ENCODE measurements at regions of chr7 and their contacts with region 1.

Region 1: DNA sequence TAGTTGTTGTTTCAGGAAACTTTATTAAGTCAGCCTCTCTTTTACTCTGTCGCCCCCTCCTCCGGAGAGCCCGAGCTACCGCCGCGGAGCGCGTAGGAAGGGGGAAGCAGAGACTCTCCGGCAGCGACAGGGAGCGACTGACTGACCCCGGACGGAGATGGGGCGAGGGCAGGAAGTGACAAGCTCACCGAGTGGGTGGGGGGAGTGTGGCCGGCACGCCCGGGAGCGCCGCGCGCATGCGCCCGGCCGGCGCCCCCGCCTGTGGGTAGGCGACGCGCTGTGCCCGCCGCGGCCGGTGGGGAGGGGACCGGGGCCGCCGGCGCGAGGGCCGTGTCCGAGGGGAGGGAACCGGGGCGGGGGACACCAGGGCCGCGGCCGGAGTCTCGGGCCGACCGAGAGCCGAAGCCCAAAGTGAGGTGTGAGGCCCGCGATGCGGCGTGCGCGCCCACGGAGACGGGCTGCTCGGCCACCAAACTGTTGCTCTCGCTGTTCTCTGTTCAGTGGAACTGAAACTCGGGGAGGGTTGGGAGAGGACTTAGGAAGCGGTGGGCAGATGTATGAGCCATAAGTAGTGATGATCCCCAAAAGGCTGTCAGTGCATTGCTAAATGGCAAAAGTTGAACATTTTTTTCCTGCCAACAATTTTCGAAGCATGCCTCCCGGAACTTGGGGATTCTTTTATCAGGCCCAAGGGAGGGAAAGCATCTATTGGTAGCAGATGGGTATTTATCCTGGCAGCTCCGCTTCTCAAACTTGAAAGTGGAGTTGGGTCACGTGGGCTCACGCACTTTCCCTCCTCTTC is at the start of gene ZNF800:
- DNase-seq: peak; percentile 86
- H3K4me3 Mint-ChIP-seq: peak within 1 kb of the TSS; percentile 95
- H3K27ac Mint-ChIP-seq: peak within 1 kb of the TSS; percentile 97
- H3K4me1 Mint-ChIP-seq: peaks cover 60% of the 10 kb centered on the region
- H3K27me3 Mint-ChIP-seq: peaks cover 6% of the 10 kb centered on the region
- total RNA-seq, gene ZNF800: 39.1 and 44.2 TPM in 2 replicates

Region 2: DNA sequence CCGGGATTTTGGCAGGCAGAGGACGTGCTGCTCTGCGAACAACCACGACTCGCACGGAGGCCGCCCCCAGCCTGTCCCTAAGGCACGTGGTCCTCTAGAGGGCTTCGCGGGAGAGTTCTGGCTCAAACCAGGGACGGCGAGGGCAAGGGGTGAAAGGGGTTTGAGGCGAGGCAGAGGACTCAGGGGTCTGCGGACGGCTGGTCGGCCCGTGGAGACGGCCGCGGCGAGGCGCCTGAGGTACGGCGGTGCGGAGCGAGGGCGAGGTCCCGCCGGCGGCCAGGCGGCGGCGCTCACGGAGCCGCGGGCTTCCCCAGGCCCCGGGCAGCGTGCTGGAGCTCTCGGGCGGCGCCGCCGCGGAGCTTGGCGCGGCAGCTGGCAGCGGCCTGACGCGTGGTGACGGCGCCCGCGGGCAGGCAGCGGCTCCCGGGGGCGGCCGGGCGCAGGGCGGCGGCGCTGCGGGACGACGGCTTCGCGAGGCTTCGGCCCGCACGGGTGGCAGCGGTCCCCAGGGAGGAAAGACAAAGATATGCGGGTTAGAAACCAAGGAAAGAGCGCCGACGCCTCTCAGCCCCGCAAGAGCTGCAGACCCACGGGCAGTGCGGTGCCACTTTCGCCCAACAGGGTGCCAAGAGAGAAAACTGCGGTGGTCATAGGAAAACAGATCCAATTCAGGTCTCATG is 45.1 kb before region 1 on chr7:
- intact Hi-C with region 1: loop called (anchors 2 kb)
- DNase-seq: peak; percentile 59
- H3K4me3 Mint-ChIP-seq: peak overlapping the region; percentile 25
- H3K27ac Mint-ChIP-seq: no peak overlapping the region
- H3K4me1 Mint-ChIP-seq: peaks cover 7% of the 10 kb centered on the region
- H3K27me3 Mint-ChIP-seq: peaks cover 24% of the 10 kb centered on the region

Region 3: DNA sequence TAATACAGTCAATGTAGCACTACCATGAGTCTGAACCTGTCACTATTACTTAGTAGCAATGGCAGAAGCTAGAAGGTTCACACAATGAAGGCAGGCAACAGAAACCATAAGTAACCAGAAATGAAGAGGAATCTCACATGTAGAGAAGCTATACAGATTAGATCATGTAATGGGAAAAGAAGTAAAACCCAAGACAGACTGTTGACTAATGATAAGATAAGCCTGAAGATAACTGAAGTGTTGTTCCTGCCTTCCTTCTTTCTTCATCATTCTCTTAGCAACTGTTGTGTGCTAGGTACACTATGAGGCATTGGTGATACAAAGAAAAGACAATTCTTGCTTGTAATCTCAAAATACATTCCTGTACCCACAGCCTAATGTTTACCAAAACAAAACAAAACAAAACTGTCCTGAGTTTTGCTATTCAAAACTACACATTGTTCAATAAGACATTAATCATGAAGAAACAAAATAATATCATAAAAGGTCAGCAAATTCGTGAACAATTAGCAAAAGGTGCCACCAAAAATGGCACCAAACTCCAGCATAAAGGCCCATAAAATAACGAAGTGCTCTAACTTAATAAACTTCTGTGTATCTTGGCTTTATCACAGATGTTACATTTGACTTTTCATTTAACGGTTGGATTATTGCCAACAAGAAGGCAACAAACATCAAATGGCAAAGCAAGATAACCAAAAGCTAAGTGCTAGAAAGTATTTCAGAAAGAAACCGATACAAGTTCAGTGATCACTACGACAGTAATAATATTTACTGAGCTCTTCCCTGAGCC is 27.4 kb before region 1 on chr7:
- intact Hi-C with region 1: no loop called
- DNase-seq: no peak
- H3K4me3 Mint-ChIP-seq: no peak overlapping the region
- H3K27ac Mint-ChIP-seq: no peak overlapping the region
- H3K4me1 Mint-ChIP-seq: peaks cover 10% of the 10 kb centered on the region
- H3K27me3 Mint-ChIP-seq: no peaks in the 10 kb centered on the region

Region 4: DNA sequence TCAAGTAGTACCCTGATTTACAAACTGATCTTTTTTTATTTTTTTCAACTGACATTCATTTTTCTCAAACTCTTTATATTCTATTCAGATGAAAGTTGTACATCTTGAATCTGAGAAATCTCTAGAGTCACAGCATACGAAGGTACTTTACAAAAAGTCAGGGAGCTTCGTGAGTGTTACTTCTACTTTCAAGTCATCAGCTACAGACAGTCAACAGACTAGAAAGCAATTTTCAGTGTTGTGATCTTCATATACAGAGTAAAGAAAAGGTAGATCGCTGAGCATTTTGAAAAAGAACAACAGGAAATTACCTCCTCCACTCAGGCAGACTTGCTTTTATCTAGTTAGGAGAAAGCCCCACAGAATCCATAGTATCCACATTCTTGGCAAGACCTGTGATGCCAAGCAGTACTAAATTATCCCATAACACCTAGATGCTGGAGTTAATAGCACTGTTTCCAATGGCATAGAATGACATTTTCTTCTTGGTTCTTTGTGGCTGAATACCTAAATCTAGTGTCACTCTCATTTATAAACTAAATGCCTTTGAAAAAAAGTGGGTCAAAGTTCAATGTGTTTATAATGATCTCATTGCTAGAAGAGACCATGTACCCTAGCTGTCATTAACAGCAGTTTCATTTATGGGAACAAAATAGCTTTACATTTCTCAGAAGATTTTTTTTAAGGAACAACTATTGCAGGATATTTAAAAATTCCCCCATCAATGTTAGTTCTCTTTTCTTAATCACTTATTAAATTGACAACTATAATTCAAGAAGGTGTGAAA is 11.7 kb after region 1 on chr7:
- intact Hi-C with region 1: loop called (anchors 1 kb)
- DNase-seq: no peak
- H3K4me3 Mint-ChIP-seq: no peak overlapping the region
- H3K27ac Mint-ChIP-seq: no peak overlapping the region
- H3K4me1 Mint-ChIP-seq: peaks cover 12% of the 10 kb centered on the region
- H3K27me3 Mint-ChIP-seq: peaks cover 15% of the 10 kb centered on the region

Region 5: GRCh38 chr7:127447326-127447945 is 54.7 kb after region 1 on chr7:
- intact Hi-C with region 1: loop called (anchors 1 kb)
- DNase-seq: peak; percentile 56
- H3K4me3 Mint-ChIP-seq: no peak overlapping the region
- H3K27ac Mint-ChIP-seq: no peak overlapping the region
- H3K4me1 Mint-ChIP-seq: no peaks in the 10 kb centered on the region
- H3K27me3 Mint-ChIP-seq: peaks cover 36% of the 10 kb centered on the region

Region 6: DNA sequence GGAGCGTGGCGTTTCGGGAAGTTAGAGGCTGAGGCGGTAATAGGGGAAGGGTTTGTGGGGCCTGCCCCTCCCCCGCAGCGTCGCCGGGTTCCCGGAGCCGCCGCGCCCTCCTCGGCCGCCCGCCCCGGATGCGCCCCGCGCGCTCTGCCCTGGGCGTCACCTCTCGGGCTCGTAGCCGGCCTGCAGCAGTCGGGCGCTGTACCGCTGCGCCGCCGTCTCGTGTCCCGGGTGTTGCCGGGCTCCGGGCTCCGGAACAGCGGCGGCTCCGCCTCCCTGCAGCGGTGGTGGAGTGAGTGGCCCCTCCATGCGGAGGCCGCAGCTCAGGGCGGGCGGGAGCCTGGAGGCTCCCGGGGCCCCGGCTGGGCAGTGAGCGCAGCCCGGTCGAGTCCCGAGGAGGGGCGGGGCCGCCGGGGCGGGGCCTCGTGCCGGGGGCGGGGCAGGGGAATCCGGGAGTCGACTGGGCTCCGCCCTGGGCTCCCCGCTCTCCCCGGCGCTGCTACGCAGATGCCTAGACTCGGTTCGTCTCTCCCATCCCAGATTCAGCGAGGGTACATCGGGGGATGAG is 1016.9 kb after region 1 on chr7 and contains the start of gene IMPDH1:
- intact Hi-C with region 1: loop called (anchors 5 kb)
- DNase-seq: peak; percentile 82
- H3K4me3 Mint-ChIP-seq: peak within 1 kb of the TSS; percentile 93
- H3K27ac Mint-ChIP-seq: peak within 1 kb of the TSS; percentile 80
- H3K4me1 Mint-ChIP-seq: peaks cover 36% of the 10 kb centered on the region
- H3K27me3 Mint-ChIP-seq: peaks cover 25% of the 10 kb centered on the region
- total RNA-seq, gene IMPDH1: 91.7 and 95.8 TPM in 2 replicates

Measured in activated T-helper 1 cell treated with anti-CD3 and anti-CD28 coated beads, Interleukin-12 subunit alpha, Interleukin-12 subunit beta, Interleukin-2, Interleukin-4 antibody, amounts not matched to agents 30 ng/mL and 10 ng/mL and 1 ng/mL, durations not matched to agents 14 hours and 24 hours and 36 hours (primary cell).